PC-3 (cell line): ENCODE measurements at regions of chr16 and their contacts with region 1.

Region 1: GRCh38 chr16:5060081-5060641 is 5.6 kb downstream of the C16orf89 start:
- DNase-seq: no peak
- ATAC-seq: no peak
- H3K4me3 ChIP-seq: no peak overlapping the region
- H3K27ac ChIP-seq: no peak overlapping the region
- H3K4me1 ChIP-seq: no peaks in the 10 kb centered on the region
- H3K27me3 ChIP-seq: no peaks in the 10 kb centered on the region
- CTCF ChIP-seq: no peak

Region 2: GRCh38 chr16:5041600-5042133 is 18.5 kb before region 1 on chr16:
- CTCF ChIA-PET with region 1: no interaction called
- POLR2A ChIA-PET with region 1: no interaction called
- intact Hi-C with region 1: no loop called
- DNase-seq: peak; percentile 68
- ATAC-seq: peak; percentile 90
- H3K4me3 ChIP-seq: no peak overlapping the region
- H3K27ac ChIP-seq: no peak overlapping the region
- H3K4me1 ChIP-seq: peaks cover 9% of the 10 kb centered on the region
- H3K27me3 ChIP-seq: no peaks in the 10 kb centered on the region
- CTCF ChIP-seq: no peak

Region 3: DNA sequence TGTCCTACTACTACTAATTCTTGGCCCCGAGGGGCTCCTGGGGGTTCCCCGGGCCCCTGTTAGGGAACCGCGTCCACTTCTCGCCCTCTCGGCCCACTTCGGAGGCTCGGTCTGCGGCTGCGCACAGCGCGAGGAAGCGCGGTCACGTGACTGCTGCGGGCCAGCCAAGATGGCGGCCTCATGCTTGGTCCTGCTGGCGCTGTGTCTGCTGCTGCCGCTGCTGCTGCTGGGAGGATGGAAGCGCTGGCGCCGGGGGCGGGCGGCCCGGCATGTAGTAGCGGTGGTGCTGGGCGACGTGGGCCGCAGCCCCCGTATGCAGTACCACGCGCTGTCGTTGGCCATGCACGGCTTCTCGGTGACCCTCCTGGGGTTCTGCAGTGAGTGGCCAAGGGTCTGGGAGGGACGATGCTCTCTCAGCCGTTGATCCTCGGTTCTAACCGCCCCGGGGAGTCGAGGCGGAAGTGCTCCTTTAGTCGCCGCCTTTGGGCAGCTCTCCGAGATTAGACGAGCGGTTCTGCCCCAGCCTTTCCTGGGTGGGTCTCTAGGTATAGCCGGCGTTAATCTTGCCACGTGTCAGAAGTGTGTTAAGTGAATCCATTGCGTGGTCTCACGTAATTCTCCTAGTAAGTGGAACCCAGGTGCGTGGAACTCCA is 11.6 kb after region 1 on chr16 and contains the start of gene ALG1:
- CTCF ChIA-PET with region 1: no interaction called
- POLR2A ChIA-PET with region 1: interaction called, 10 read pairs
- intact Hi-C with region 1: no loop called
- DNase-seq: peak; percentile 78
- ATAC-seq: peak; percentile 86
- H3K4me3 ChIP-seq: peak within 1 kb of the TSS; percentile 78
- H3K27ac ChIP-seq: peak within 1 kb of the TSS; percentile 11; the same call in 1 of the 2 replicates
- H3K4me1 ChIP-seq: peaks cover 16% of the 10 kb centered on the region
- H3K27me3 ChIP-seq: no peaks in the 10 kb centered on the region
- CTCF ChIP-seq: no peak
- total RNA-seq, gene ALG1: 22.9 and 29.7 TPM in 2 replicates

Region 4: GRCh38 chr16:5479926-5480325 is 419.8 kb after region 1 on chr16:
- CTCF ChIA-PET with region 1: no interaction called
- POLR2A ChIA-PET with region 1: no interaction called
- intact Hi-C with region 1: no loop called
- DNase-seq: no peak
- ATAC-seq: no peak
- H3K4me3 ChIP-seq: no peak overlapping the region
- H3K27ac ChIP-seq: no peak overlapping the region
- H3K4me1 ChIP-seq: no peaks in the 10 kb centered on the region
- H3K27me3 ChIP-seq: no peaks in the 10 kb centered on the region; the same call in 1 of the 2 replicates
- CTCF ChIP-seq: no peak